Activated CD4-positive, alpha-beta T cell treated with anti-CD3 and anti-CD28 coated beads, Interleukin-2, amount 10 ng/mL, durations not matched to agents 24 days and 14 days (primary cell): ENCODE measurements at regions of chr4 and their contacts with region 1.

Region 1: GRCh38 chr4:147866532-147867271 is 134.8 kb downstream of the ARHGAP10 start:
- DNase-seq: peak; percentile 96
- H3K4me3 Mint-ChIP-seq: no peak overlapping the region
- H3K27ac Mint-ChIP-seq: no peak overlapping the region
- H3K4me1 Mint-ChIP-seq: peaks cover 5% of the 10 kb centered on the region
- H3K27me3 Mint-ChIP-seq: no peaks in the 10 kb centered on the region

Region 2: GRCh38 chr4:147160908-147161513 is 705.7 kb before region 1 on chr4:
- intact Hi-C with region 1: loop called (anchors 2 kb)
- DNase-seq: peak; percentile 58
- H3K4me3 Mint-ChIP-seq: no peak overlapping the region
- H3K27ac Mint-ChIP-seq: no peak overlapping the region
- H3K4me1 Mint-ChIP-seq: no peaks in the 10 kb centered on the region
- H3K27me3 Mint-ChIP-seq: peaks cover 23% of the 10 kb centered on the region

Region 3: GRCh38 chr4:147590249-147590920 is 276.3 kb before region 1 on chr4:
- intact Hi-C with region 1: loop called (anchors 5 kb)
- DNase-seq: peak; percentile 79
- H3K4me3 Mint-ChIP-seq: no peak overlapping the region
- H3K27ac Mint-ChIP-seq: no peak overlapping the region
- H3K4me1 Mint-ChIP-seq: no peaks in the 10 kb centered on the region
- H3K27me3 Mint-ChIP-seq: peaks cover 9% of the 10 kb centered on the region

Region 4: DNA sequence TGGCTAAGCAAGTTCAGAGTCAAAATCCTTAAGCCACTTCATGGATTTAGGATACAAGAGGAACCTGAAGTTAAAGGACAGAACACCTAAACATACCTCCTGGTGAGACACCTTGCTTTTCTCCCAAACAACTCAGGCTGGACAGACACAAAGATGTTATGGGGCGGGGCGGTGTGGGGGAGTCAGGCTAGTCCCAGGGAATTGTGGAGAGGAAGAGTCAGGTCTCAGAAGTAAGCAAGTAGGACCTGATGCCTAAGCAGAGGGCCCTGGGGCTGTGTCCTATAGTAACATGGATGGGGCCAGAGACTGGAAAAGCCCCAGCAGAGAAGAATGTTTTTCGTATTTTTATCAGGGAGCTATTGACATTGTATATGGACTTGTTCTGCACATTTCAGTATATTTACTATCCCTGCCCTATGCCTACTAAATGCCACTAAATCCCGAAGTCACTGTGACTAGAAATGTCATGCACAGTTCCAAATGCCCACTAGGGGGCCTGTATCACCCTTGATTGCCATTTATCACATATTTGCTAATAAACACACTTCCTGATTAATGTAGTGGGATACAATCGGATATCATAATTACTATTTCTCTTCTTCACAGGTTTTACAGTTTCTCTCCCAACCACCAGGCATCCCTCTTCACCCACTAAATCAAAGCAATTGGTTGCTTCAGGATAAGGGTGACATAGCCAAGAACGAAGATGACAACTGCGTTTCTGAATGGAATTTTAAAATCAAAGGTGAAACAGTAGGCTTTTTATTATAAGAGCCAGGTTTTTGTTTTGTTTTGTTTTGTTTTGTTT is 158.6 kb before region 1 on chr4:
- intact Hi-C with region 1: loop called (anchors 1 kb)
- DNase-seq: peak; percentile 81
- H3K4me3 Mint-ChIP-seq: no peak overlapping the region
- H3K27ac Mint-ChIP-seq: no peak overlapping the region
- H3K4me1 Mint-ChIP-seq: peaks cover 3% of the 10 kb centered on the region
- H3K27me3 Mint-ChIP-seq: peaks cover 10% of the 10 kb centered on the region

Region 5: GRCh38 chr4:147799986-147800555 is 66.6 kb before region 1 on chr4:
- intact Hi-C with region 1: loop called (anchors 1 kb)
- DNase-seq: peak; percentile 90
- H3K4me3 Mint-ChIP-seq: peak overlapping the region; percentile 74
- H3K27ac Mint-ChIP-seq: peak overlapping the region; percentile 86
- H3K4me1 Mint-ChIP-seq: peaks cover 49% of the 10 kb centered on the region
- H3K27me3 Mint-ChIP-seq: peaks cover 15% of the 10 kb centered on the region